B cell (primary cell): ENCODE measurements at regions of chr14 and their contacts with region 1.

Region 1: GRCh38 chr14:56117765-56118610 is at the start of gene PELI2:
- DNase-seq: peak; percentile 93
- ATAC-seq: peak; percentile 89
- H3K4me3 ChIP-seq: peak within 1 kb of the TSS; percentile 60 to 93 (median 83)
- H3K4me3 Mint-ChIP-seq: peak within 1 kb of the TSS; percentile 96
- H3K27ac ChIP-seq: peak within 1 kb of the TSS; percentile 68 to 94
- H3K27ac Mint-ChIP-seq: peak within 1 kb of the TSS; percentile 98
- H3K4me1 ChIP-seq: peaks cover 18 to 31% of the 10 kb centered on the region in 2 donors
- H3K4me1 Mint-ChIP-seq: peaks cover 55% of the 10 kb centered on the region
- H3K27me3 ChIP-seq: peaks cover 0 to 4% (median 0%) of the 10 kb centered on the region in 4 experiments
- H3K27me3 Mint-ChIP-seq: peaks cover 3% of the 10 kb centered on the region
- CTCF ChIP-seq: no peak
- total RNA-seq, gene PELI2: 13.4 and 18.9 TPM in 2 replicates

Region 2: GRCh38 chr14:55071870-55072640 is 1045.9 kb before region 1 on chr14:
- CTCF ChIA-PET with region 1: no interaction called
- POLR2A ChIA-PET with region 1: no interaction called
- intact Hi-C with region 1: loop called (anchors 10 kb)
- DNase-seq: peak; percentile 86
- ATAC-seq: peak; percentile 75
- H3K4me3 ChIP-seq: peak overlapping the region in 4 of 5 experiments; percentile 4 to 48 (median 31)
- H3K4me3 Mint-ChIP-seq: peak overlapping the region; percentile 81
- H3K27ac ChIP-seq: peak overlapping the region; percentile 84 to 93
- H3K27ac Mint-ChIP-seq: peak overlapping the region; percentile 96
- H3K4me1 ChIP-seq: peaks cover 34 to 52% of the 10 kb centered on the region in 2 donors
- H3K4me1 Mint-ChIP-seq: peaks cover 66% of the 10 kb centered on the region
- H3K27me3 ChIP-seq: no peaks in the 10 kb centered on the region
- H3K27me3 Mint-ChIP-seq: no peaks in the 10 kb centered on the region
- CTCF ChIP-seq: no peak

Region 3: GRCh38 chr14:56094076-56094475 is 23.9 kb before region 1 on chr14:
- CTCF ChIA-PET with region 1: no interaction called
- POLR2A ChIA-PET with region 1: no interaction called
- intact Hi-C with region 1: no loop called
- DNase-seq: no peak
- ATAC-seq: no peak
- H3K4me3 ChIP-seq: no peak overlapping the region
- H3K4me3 Mint-ChIP-seq: no peak overlapping the region
- H3K27ac ChIP-seq: no peak overlapping the region
- H3K27ac Mint-ChIP-seq: no peak overlapping the region
- H3K4me1 ChIP-seq: no peaks in the 10 kb centered on the region
- H3K4me1 Mint-ChIP-seq: no peaks in the 10 kb centered on the region
- H3K27me3 ChIP-seq: peaks cover 0 to 4% (median 0%) of the 10 kb centered on the region in 4 experiments
- H3K27me3 Mint-ChIP-seq: peaks cover 31% of the 10 kb centered on the region
- CTCF ChIP-seq: no peak

Region 4: GRCh38 chr14:56129933-56130332 is 11.9 kb after region 1 on chr14:
- CTCF ChIA-PET with region 1: interaction called, 7 read pairs
- POLR2A ChIA-PET with region 1: interaction called, 6 read pairs
- intact Hi-C with region 1: loop called (anchors 2 kb)
- DNase-seq: no peak
- ATAC-seq: no peak
- H3K4me3 ChIP-seq: no peak overlapping the region
- H3K4me3 Mint-ChIP-seq: no peak overlapping the region
- H3K27ac ChIP-seq: no peak overlapping the region
- H3K27ac Mint-ChIP-seq: no peak overlapping the region
- H3K4me1 ChIP-seq: peaks cover 13 to 18% of the 10 kb centered on the region in 2 donors
- H3K4me1 Mint-ChIP-seq: peaks cover 49% of the 10 kb centered on the region
- H3K27me3 ChIP-seq: no peaks in the 10 kb centered on the region
- H3K27me3 Mint-ChIP-seq: peaks cover 3% of the 10 kb centered on the region
- CTCF ChIP-seq: no peak

Region 5: DNA sequence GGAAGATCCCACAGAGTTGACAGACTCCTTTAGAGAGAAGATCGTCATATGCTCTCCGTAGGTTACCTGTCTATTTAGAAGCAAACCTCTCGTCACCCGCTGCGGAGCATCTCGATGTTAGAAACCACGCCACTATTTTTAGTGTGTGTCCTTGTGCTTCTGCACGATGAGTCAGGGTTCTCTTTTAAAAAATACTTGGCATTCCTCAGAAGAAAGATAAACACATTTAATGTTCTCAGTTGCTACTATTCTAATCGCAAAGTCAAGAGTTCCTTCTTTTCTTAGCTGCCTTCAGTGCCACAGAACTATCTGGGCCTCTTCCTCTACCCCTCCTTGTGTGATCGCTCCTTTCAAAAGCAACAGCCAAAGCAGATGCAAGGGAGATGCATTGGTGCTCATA is 192.7 kb after region 1 on chr14:
- CTCF ChIA-PET with region 1: no interaction called
- POLR2A ChIA-PET with region 1: no interaction called
- intact Hi-C with region 1: no loop called
- DNase-seq: no peak
- ATAC-seq: no peak
- H3K4me3 ChIP-seq: no peak overlapping the region
- H3K4me3 Mint-ChIP-seq: no peak overlapping the region
- H3K27ac ChIP-seq: no peak overlapping the region
- H3K27ac Mint-ChIP-seq: no peak overlapping the region
- H3K4me1 ChIP-seq: no peaks in the 10 kb centered on the region
- H3K4me1 Mint-ChIP-seq: no peaks in the 10 kb centered on the region
- H3K27me3 ChIP-seq: no peaks in the 10 kb centered on the region
- H3K27me3 Mint-ChIP-seq: no peaks in the 10 kb centered on the region
- CTCF ChIP-seq: no peak

Region 6: DNA sequence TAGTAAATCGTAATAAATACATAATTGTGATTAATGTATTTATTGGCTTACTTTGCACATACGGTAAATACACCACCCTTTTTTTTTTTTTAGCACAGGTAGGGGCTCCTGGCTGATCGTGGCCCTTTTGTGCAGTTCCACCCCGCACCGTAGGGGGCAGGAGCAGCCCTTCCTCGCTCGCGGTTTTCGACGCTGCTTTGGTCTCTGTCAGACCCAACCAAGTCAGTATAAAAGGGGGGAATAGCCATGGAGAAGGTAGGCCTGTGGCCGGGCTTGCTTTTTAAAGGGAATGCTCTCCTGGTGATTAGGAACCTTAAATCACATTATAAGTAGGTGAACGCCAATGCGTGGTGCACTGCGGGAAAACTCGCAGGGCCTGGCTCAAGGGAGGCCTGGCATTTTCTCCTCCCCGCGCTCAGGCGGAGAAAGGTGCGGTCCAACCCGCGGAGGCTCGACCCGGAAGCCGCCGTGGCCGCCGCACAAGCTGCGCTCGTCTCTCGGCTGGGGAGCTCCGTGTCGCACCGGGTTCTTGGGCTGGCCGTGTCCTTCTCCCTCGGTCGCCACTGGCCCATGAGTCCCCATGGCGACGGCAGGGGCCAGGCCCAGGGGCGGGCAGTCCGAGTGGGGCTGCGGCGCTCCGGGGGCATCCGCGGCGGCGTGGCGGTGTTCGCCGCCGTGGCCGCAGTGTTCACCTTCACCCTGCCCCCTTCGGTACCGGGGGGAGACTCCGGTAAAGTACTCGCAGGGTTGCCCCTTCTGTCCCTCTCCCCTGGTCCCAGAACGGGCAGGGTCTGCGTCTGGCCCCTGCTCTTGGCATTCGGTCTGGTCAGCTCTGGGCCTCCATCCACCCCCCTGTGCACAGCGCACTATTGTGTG is 461.6 kb after region 1 on chr14 and contains the start of gene TMEM260:
- CTCF ChIA-PET with region 1: no interaction called
- POLR2A ChIA-PET with region 1: no interaction called
- intact Hi-C with region 1: loop called (anchors 5 kb)
- DNase-seq: peak; percentile 97
- ATAC-seq: peak; percentile 94
- H3K4me3 ChIP-seq: peak within 1 kb of the TSS; percentile 75 to 97 (median 90)
- H3K4me3 Mint-ChIP-seq: peak within 1 kb of the TSS; percentile 96
- H3K27ac ChIP-seq: peak within 1 kb of the TSS; percentile 78 to 91
- H3K27ac Mint-ChIP-seq: peak within 1 kb of the TSS; percentile 98
- H3K4me1 ChIP-seq: peaks cover 23 to 24% of the 10 kb centered on the region in 2 donors
- H3K4me1 Mint-ChIP-seq: peaks cover 38% of the 10 kb centered on the region
- H3K27me3 ChIP-seq: peaks cover 0 to 4% (median 0%) of the 10 kb centered on the region in 4 experiments
- H3K27me3 Mint-ChIP-seq: peaks cover 3% of the 10 kb centered on the region
- CTCF ChIP-seq: peak; percentile 97
- total RNA-seq, gene TMEM260: 33.9 and 39.3 TPM in 2 replicates